Upper lobe of right lung (tissue), 1 donor: ENCODE measurements at regions of chr2 and their contacts with region 1.

Region 1: GRCh38 chr2:105118960-105119359 is 81.1 kb downstream of the MRPS9 start:
- DNase-seq: no peak
- ATAC-seq: peak; percentile 32
- H3K4me3 ChIP-seq: no peak overlapping the region
- H3K27ac ChIP-seq: no peak overlapping the region
- H3K4me1 ChIP-seq: no peaks in the 10 kb centered on the region
- H3K27me3 ChIP-seq: no peaks in the 10 kb centered on the region
- CTCF ChIP-seq: no peak

Region 2: DNA sequence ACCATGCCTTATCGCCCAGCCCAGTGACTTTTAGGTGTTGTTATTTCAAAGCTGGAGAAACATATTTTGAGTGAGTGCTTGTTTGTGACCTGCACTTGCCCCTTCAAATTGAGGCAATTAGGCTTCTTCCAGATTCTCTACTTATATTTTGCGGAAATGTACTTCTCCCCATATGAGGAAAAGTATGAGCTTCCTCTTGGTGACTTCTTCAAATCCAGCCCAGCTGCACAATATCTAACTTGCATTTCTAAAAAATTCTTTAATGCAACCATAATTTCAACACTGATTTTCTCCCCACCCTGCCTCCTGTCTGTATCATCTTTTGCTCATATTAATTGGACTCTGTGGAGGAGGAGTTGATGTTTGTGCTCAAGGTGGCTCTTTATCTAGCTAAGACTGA is 656.2 kb before region 1 on chr2:
- intact Hi-C with region 1: no loop called
- DNase-seq: no peak
- ATAC-seq: no peak
- H3K4me3 ChIP-seq: no peak overlapping the region
- H3K27ac ChIP-seq: no peak overlapping the region
- H3K4me1 ChIP-seq: no peaks in the 10 kb centered on the region
- H3K27me3 ChIP-seq: no peaks in the 10 kb centered on the region
- CTCF ChIP-seq: no peak

Region 3: GRCh38 chr2:105235388-105236054 is 116.6 kb after region 1 on chr2:
- intact Hi-C with region 1: loop called (anchors 5 kb)
- DNase-seq: peak; percentile 81
- ATAC-seq: peak; percentile 67
- H3K4me3 ChIP-seq: no peak overlapping the region
- H3K27ac ChIP-seq: no peak overlapping the region
- H3K4me1 ChIP-seq: peaks cover 8% of the 10 kb centered on the region
- H3K27me3 ChIP-seq: peaks cover 6% of the 10 kb centered on the region
- CTCF ChIP-seq: peak; percentile 72

Region 4: GRCh38 chr2:105582952-105583660 is 464.1 kb after region 1 on chr2:
- intact Hi-C with region 1: no loop called
- DNase-seq: no peak
- ATAC-seq: no peak
- H3K4me3 ChIP-seq: no peak overlapping the region
- H3K27ac ChIP-seq: no peak overlapping the region
- H3K4me1 ChIP-seq: no peaks in the 10 kb centered on the region
- H3K27me3 ChIP-seq: no peaks in the 10 kb centered on the region
- CTCF ChIP-seq: no peak